ENCODE measurements at regions of chr2 and their contacts with region 1.

Region 1: DNA sequence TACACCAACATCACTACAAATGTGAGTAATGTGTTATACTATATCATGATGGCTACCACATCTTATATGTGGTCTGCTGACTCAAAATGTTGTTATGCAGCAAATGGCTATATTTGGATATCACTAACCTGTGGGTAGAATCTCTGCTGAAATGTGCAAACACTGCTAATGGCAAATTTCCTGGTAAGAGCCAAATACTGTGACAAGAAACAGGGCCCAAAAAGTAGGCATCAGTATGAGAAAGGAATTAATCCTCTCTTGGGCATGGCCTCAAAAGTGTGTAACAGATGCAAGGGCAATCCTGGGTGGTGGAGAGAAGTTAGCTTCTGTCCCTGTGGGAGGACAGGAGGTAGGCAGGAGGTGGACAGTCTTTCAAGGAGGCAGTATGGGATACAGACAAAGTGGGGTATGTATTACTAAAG is 13.3 kb downstream of the ATF2 start:
- DNase-seq: peak in 1 of 2 experiments; percentile 92
- H3K4me3 ChIP-seq: no peak overlapping the region
- H3K27ac ChIP-seq: peak overlapping the region; percentile 55
- H3K4me1 ChIP-seq: peaks cover 25% of the 10 kb centered on the region
- H3K27me3 ChIP-seq: no peaks in the 10 kb centered on the region
- CTCF ChIP-seq: no peak

Region 2: DNA sequence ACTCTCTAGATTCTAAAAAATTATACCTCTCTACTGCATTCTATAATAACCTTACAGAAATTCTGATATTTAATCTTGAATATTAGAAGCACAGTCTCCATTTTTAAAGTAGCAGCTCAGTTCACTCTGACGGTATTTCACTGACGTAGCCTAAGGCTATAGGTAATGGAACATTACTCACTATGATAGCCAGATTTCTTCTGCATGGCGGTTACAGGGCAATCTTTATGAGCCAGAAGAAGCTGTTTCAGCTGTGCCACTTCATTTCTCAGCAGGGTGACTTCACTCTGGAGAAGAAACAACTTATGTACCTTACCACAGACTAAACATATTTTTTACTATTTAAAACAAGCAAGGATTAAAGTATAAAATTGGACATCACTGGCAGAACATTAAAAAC is 74.2 kb before region 1 on chr2:
- CTCF ChIA-PET with region 1: no interaction called
- POLR2A ChIA-PET with region 1: no interaction called
- intact Hi-C with region 1: loop called (anchors 2 kb)
- DNase-seq: no peak
- H3K4me3 ChIP-seq: no peak overlapping the region
- H3K27ac ChIP-seq: no peak overlapping the region
- H3K4me1 ChIP-seq: no peaks in the 10 kb centered on the region
- H3K27me3 ChIP-seq: no peaks in the 10 kb centered on the region
- CTCF ChIP-seq: no peak

Region 3: DNA sequence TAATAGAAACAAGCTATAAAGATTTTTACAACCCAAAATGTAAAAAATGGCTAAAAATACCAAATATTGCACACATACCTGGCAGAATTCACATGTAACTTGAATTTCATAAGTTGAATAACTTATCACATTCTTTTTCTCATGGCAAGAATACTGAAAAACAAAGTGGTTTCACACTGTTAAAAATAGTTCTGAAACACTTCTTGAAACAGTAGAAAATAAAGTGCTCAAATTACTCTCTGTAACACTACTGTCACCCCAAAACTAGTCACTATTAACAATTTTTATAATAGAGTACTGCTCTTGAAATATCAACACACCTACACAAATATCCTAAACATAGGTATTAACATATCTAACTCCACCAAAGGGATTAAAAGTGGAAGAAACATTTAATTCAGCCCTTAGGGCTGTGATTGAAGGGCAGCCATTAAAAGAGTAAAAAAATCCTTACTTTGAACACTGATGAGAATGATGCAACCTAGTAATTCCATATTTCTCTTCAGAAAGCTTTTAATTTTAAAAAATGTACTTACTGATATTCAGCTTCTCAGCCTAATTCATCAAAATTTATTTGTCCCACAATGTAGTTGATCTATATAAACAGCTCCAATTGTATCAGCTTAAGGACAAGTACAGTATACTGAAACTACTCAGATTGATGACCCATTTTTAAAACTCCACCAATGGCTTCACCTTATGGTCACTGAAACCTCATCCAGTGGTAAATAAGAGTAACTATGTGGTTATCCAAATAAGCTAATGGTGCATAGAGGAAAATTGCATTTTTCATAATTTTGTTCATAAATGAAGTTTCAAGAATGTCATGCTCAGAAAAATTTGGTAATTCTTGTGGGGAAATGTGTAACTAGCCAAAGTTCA is 18.1 kb before region 1 on chr2:
- CTCF ChIA-PET with region 1: no interaction called
- POLR2A ChIA-PET with region 1: interaction called, 14 read pairs
- intact Hi-C with region 1: no loop called
- DNase-seq: peak in 1 of 2 experiments; percentile 26
- H3K4me3 ChIP-seq: no peak overlapping the region
- H3K27ac ChIP-seq: no peak overlapping the region
- H3K4me1 ChIP-seq: no peaks in the 10 kb centered on the region
- H3K27me3 ChIP-seq: no peaks in the 10 kb centered on the region
- CTCF ChIP-seq: no peak

Region 4: DNA sequence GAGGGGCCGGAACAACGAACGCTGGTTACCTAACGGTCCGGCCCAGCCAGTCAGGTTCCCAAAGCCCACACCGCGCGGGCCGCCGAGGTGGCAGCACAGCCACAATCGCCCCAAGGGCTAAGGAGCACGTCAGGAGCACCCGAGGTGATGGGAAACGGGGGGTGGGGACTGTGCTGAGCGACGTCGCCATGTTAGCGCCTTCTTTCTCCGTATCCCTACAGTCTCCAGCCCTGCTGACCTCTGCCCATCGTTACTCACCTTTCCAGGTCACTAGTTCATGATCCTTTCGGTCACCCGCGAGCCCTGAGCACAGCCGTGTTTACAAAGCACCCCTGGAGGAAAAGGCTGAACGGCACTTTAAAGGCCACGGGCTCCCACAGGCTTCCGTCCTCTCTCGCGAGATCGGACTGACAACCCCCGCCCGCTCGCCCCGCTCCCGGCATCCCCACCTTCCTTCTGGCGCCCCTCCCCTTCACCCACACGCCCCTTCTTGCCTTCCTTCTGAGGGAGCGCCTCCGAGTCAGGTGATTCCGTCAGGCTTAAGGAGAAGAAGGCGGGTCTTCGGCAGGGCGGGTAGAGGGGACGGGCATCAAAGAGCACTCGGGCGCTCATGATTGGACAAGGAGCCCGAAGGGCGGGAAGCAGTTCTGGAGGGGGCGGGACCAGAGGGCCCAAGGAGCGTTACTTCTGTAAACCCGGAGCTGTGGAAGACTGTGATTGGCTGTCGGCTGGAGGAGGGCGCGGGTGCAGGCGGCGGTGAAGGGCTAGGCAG is 13.3 kb after region 1 on chr2 and contains the start of gene ATF2:
- CTCF ChIA-PET with region 1: no interaction called
- POLR2A ChIA-PET with region 1: no interaction called
- intact Hi-C with region 1: loop called (anchors 1 kb)
- DNase-seq: peak; percentile 100
- H3K4me3 ChIP-seq: peak within 1 kb of the TSS; percentile 91
- H3K27ac ChIP-seq: peak within 1 kb of the TSS; percentile 67
- H3K4me1 ChIP-seq: peaks cover 20% of the 10 kb centered on the region
- H3K27me3 ChIP-seq: no peaks in the 10 kb centered on the region
- CTCF ChIP-seq: no peak
- total RNA-seq, gene ATF2: 80.9 and 94.5 TPM in 2 replicates

Region 5: GRCh38 chr2:175662335-175662734 is 507.7 kb after region 1 on chr2:
- CTCF ChIA-PET with region 1: no interaction called
- POLR2A ChIA-PET with region 1: no interaction called
- intact Hi-C with region 1: no loop called
- DNase-seq: no peak
- H3K4me3 ChIP-seq: no peak overlapping the region
- H3K27ac ChIP-seq: no peak overlapping the region
- H3K4me1 ChIP-seq: no peaks in the 10 kb centered on the region
- H3K27me3 ChIP-seq: peaks cover 42% of the 10 kb centered on the region
- CTCF ChIP-seq: no peak

Region 6: GRCh38 chr2:176419591-176420071 is 1265.0 kb after region 1 on chr2:
- CTCF ChIA-PET with region 1: interaction called, 16 read pairs
- POLR2A ChIA-PET with region 1: no interaction called
- intact Hi-C with region 1: no loop called
- DNase-seq: no peak
- H3K4me3 ChIP-seq: no peak overlapping the region
- H3K27ac ChIP-seq: no peak overlapping the region
- H3K4me1 ChIP-seq: no peaks in the 10 kb centered on the region
- H3K27me3 ChIP-seq: no peaks in the 10 kb centered on the region
- CTCF ChIP-seq: no peak